Calu3 (cell line): ENCODE measurements at regions of chr2 and their contacts with region 1.

Region 1: GRCh38 chr2:153497938-153498629 is 19.5 kb upstream of the RPRM start:
- DNase-seq: no peak
- H3K4me3 Mint-ChIP-seq: no peak overlapping the region
- H3K27ac Mint-ChIP-seq: no peak overlapping the region
- H3K4me1 Mint-ChIP-seq: no peaks in the 10 kb centered on the region
- H3K27me3 Mint-ChIP-seq: no peaks in the 10 kb centered on the region
- CTCF ChIP-seq: no peak

Region 2: GRCh38 chr2:153487448-153487847 is 10.6 kb before region 1 on chr2:
- CTCF ChIA-PET with region 1: interaction called, 10 read pairs
- intact Hi-C with region 1: no loop called
- DNase-seq: no peak
- H3K4me3 Mint-ChIP-seq: no peak overlapping the region
- H3K27ac Mint-ChIP-seq: no peak overlapping the region
- H3K4me1 Mint-ChIP-seq: no peaks in the 10 kb centered on the region
- H3K27me3 Mint-ChIP-seq: no peaks in the 10 kb centered on the region
- CTCF ChIP-seq: no peak